ENCODE measurements at regions of chr1 and their contacts with region 1.

Region 1: DNA sequence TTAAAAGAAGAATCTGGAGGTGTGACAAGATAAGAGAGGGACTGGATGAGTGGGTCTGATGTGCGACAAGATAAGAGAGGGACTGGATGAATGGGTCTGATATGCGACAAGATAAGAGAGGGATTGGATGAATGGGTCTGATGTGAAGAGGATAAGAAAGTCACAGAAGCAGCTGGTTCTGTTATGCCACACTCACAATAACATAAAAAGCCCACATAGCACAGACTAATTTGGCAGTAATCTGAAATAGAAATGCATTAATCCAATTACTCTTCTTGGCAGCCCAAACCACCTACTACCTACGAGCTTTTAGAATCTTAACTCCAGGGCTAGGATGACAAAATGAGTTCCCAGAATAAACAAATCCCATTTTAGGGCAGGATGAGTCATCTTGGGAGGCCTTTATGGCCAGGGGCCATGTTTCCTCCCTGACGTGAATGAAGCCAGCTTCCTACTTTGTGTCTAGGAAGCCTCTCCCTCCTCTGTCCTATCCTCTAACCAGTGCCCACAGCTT is 129.6 kb downstream of the DUSP10 start:
- DNase-seq: peak; percentile 99
- ATAC-seq: peak; percentile 89
- H3K4me3 ChIP-seq: no peak overlapping the region
- H3K27ac ChIP-seq: peak overlapping the region; percentile 73
- H3K4me1 ChIP-seq: peaks cover 45% of the 10 kb centered on the region
- H3K27me3 ChIP-seq: no peaks in the 10 kb centered on the region
- CTCF ChIP-seq: no peak

Region 2: GRCh38 chr1:221045842-221046831 is 566.2 kb before region 1 on chr1:
- CTCF ChIA-PET with region 1: no interaction called
- POLR2A ChIA-PET with region 1: no interaction called
- intact Hi-C with region 1: no loop called
- DNase-seq: no peak
- ATAC-seq: no peak; the same call in 1 of the 2 replicates
- H3K4me3 ChIP-seq: no peak overlapping the region
- H3K27ac ChIP-seq: no peak overlapping the region
- H3K4me1 ChIP-seq: no peaks in the 10 kb centered on the region
- H3K27me3 ChIP-seq: no peaks in the 10 kb centered on the region
- CTCF ChIP-seq: no peak

Region 3: DNA sequence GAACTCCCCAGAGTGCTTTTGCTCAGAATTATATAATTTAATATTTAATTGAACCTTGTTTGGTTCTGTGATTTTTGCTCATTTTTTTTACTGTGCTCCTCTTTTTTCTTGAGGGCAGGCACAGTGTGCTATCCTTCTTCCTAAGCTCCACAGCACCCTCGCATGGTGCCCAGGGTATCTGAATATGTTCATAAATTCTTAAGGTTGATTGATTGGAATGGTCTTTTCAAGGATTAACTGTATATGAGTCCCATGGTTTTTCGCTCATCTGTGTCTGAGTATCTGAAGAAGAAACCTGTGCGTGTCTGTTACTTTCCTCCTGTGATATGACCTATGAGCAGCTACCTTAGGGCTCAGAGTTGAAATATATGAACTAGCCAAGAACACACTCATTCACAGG is 339.4 kb before region 1 on chr1:
- CTCF ChIA-PET with region 1: no interaction called
- POLR2A ChIA-PET with region 1: no interaction called
- intact Hi-C with region 1: no loop called
- DNase-seq: peak; percentile 68
- ATAC-seq: peak; percentile 88
- H3K4me3 ChIP-seq: no peak overlapping the region
- H3K27ac ChIP-seq: no peak overlapping the region
- H3K4me1 ChIP-seq: no peaks in the 10 kb centered on the region
- H3K27me3 ChIP-seq: no peaks in the 10 kb centered on the region
- CTCF ChIP-seq: peak; percentile 81

Region 4: GRCh38 chr1:221487781-221488524 is 124.4 kb before region 1 on chr1:
- CTCF ChIA-PET with region 1: no interaction called
- POLR2A ChIA-PET with region 1: no interaction called
- intact Hi-C with region 1: loop called (anchors 5 kb)
- DNase-seq: peak; percentile 96
- ATAC-seq: peak; percentile 98
- H3K4me3 ChIP-seq: no peak overlapping the region; the same call in 1 of the 2 replicates
- H3K27ac ChIP-seq: peak overlapping the region; percentile 80
- H3K4me1 ChIP-seq: peaks cover 28% of the 10 kb centered on the region
- H3K27me3 ChIP-seq: no peaks in the 10 kb centered on the region
- CTCF ChIP-seq: no peak

Region 5: GRCh38 chr1:221543529-221544120 is 68.7 kb before region 1 on chr1:
- CTCF ChIA-PET with region 1: no interaction called
- POLR2A ChIA-PET with region 1: no interaction called
- intact Hi-C with region 1: loop called (anchors 2 kb)
- DNase-seq: peak; percentile 60
- ATAC-seq: peak; percentile 48; the same call in 1 of the 2 replicates
- H3K4me3 ChIP-seq: no peak overlapping the region
- H3K27ac ChIP-seq: no peak overlapping the region
- H3K4me1 ChIP-seq: peaks cover 5% of the 10 kb centered on the region; the same call in 1 of the 2 replicates
- H3K27me3 ChIP-seq: no peaks in the 10 kb centered on the region
- CTCF ChIP-seq: peak; percentile 87

Region 6: GRCh38 chr1:221576268-221576667 is 36.1 kb before region 1 on chr1:
- CTCF ChIA-PET with region 1: no interaction called
- POLR2A ChIA-PET with region 1: no interaction called
- intact Hi-C with region 1: loop called (anchors 2 kb)
- DNase-seq: peak; percentile 84
- ATAC-seq: peak; percentile 84
- H3K4me3 ChIP-seq: no peak overlapping the region
- H3K27ac ChIP-seq: peak overlapping the region; percentile 10; the same call in 1 of the 2 replicates
- H3K4me1 ChIP-seq: peaks cover 14% of the 10 kb centered on the region
- H3K27me3 ChIP-seq: no peaks in the 10 kb centered on the region
- CTCF ChIP-seq: no peak

Region 7: DNA sequence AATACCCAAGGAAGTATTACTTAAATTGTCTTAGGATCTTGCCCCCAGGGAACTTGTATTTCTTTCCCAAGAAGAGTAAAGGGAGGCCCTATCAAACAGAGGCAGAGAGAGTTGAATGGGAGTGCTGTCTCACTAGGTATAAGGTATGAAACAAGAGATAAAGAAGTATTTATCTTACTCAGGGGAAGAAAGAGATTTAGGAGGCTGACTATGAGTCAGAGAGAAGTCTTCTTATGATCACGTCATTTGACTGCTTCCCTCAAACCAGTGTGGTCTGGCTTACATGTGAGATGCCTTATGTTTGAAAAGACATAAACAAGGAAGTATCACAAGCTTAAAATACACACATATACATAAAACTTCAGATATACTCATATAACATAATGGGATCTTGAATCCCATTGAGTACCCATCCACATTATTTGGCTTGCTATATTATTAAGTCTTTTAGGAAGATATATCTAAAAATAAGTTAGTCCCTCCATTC is 99.9 kb after region 1 on chr1:
- CTCF ChIA-PET with region 1: no interaction called
- POLR2A ChIA-PET with region 1: no interaction called
- intact Hi-C with region 1: loop called (anchors 5 kb)
- DNase-seq: peak; percentile 71
- ATAC-seq: peak; percentile 42
- H3K4me3 ChIP-seq: no peak overlapping the region
- H3K27ac ChIP-seq: peak overlapping the region; percentile 34
- H3K4me1 ChIP-seq: peaks cover 28% of the 10 kb centered on the region
- H3K27me3 ChIP-seq: no peaks in the 10 kb centered on the region
- CTCF ChIP-seq: no peak

Region 8: GRCh38 chr1:221868593-221869303 is 256.4 kb after region 1 on chr1:
- CTCF ChIA-PET with region 1: no interaction called
- POLR2A ChIA-PET with region 1: no interaction called
- intact Hi-C with region 1: loop called (anchors 1 kb)
- DNase-seq: peak; percentile 93
- ATAC-seq: peak; percentile 93
- H3K4me3 ChIP-seq: peak overlapping the region; percentile 19; the same call in 1 of the 2 replicates
- H3K27ac ChIP-seq: peak overlapping the region; percentile 61
- H3K4me1 ChIP-seq: peaks cover 23% of the 10 kb centered on the region
- H3K27me3 ChIP-seq: no peaks in the 10 kb centered on the region
- CTCF ChIP-seq: no peak

Region 9: DNA sequence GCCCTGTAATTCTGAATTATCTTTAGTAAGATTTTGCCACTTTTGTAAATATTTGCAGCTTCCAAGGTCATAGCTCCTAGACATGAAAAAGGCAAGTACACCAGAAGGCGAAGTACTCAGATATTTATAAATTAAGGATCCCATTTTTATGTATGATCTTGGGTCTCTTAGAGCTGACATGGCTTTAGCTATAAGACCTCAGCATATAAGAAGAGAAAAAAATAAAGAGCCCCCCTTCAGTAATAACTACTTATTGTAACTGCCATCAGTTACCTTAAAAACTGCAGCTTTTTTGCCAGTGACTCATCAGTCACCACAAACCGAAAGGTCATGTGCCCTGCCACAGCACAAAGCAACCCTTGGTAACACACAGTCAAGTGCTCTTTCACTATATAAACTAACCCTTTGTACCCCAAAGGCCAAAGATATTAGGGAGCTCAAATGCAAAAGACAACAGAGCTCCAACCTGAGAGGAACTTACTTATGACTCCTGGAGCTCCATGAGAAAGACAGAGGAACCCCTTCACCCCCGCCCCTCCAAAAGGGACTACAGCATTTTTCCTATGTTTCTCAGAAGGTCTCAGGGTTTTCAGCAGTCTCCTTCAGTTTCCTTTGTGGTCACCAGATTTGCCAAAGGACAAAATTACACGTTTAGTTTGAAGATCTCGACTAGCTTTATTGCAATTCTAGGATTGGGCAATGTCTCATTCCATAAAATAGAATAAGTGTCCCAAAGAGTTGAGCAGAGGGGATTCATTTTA is 349.4 kb after region 1 on chr1:
- CTCF ChIA-PET with region 1: no interaction called
- POLR2A ChIA-PET with region 1: no interaction called
- intact Hi-C with region 1: loop called (anchors 10 kb)
- DNase-seq: peak; percentile 93
- ATAC-seq: peak; percentile 50
- H3K4me3 ChIP-seq: peak overlapping the region; percentile 27; the same call in 1 of the 2 replicates
- H3K27ac ChIP-seq: peak overlapping the region; percentile 74
- H3K4me1 ChIP-seq: peaks cover 65% of the 10 kb centered on the region
- H3K27me3 ChIP-seq: no peaks in the 10 kb centered on the region
- CTCF ChIP-seq: no peak

Measured in PC-3 (cell line).